Dendritic cell treated with granulocyte-macrophage colony-stimulating factor and Interleukin-4, amounts not matched to agents 40 ng/mL and 50 ng/mL, for 4 days (primary cell): ENCODE measurements at regions of chr19 and their contacts with region 1.

Region 1: DNA sequence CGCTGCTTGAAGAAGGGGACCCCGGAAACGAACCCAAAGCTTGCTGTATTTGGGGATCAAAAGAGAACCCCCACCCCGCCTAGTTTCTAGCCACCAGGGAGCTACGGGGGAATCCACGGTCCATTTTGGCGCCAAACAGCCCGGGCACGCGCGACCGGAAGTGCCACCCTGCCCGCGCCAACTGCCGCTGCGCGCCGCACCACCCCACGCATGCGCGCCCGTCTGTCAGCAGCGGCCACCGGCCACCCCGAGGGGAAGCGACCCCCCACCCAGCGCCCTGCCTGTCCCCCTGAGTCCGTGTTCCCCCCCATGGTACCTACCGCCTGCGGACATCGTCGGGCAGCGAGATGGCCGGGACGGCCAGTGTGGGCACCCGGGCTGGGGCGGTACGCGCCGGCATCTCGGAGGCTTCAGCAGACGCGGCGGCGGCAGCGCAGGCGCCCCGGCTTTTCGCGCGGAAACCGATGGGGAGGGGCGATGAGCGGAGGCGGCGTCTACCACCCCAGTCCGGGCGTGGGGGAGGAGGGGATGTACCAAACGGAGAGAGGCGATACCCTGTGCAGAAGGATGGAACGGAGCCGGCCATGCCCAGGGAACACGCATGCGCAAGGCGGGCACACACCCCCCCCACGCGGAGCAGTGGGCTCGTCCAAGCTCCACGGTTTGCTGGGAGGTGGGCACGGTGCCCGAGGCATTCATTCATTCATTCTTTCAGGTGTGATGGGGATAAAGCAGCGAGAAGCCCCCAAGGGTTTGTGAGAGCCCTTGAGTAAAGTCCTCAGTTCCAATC is at the start of gene DNMT1:
- H3K4me3 Mint-ChIP-seq: peak within 1 kb of the TSS; percentile 90
- H3K27ac Mint-ChIP-seq: peak within 1 kb of the TSS; percentile 85
- H3K4me1 Mint-ChIP-seq: peaks cover 71% of the 10 kb centered on the region
- H3K27me3 Mint-ChIP-seq: no peaks in the 10 kb centered on the region

Region 2: DNA sequence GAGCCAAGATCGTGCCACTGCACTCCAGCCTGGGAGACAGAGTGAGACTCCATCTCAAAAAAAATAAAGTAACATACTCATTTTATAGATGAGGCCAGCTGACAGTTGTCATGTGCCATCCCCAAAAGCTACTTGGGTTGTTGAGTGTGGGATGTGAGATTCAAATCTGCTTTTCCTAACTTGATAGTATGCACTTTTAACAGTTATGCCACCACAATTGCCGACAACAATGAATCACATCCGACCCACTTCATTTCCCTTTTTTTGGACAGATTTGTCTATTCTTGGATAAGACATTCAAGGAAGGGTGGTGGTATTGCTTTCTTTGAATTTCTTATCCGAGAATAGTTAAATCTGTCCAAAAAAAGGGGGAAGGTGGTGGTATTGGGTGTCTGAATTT is 16.4 kb after region 1 on chr19:
- intact Hi-C with region 1: loop called (anchors 2 kb)
- H3K4me3 Mint-ChIP-seq: peak overlapping the region; percentile 42
- H3K27ac Mint-ChIP-seq: peak overlapping the region; percentile 92
- H3K4me1 Mint-ChIP-seq: peaks cover 64% of the 10 kb centered on the region
- H3K27me3 Mint-ChIP-seq: no peaks in the 10 kb centered on the region

Region 3: GRCh38 chr19:10230861-10231611 is 36.3 kb after region 1 on chr19 and contains the start of gene S1PR2:
- intact Hi-C with region 1: loop called (anchors 5 kb)
- H3K4me3 Mint-ChIP-seq: peak within 1 kb of the TSS; percentile 92
- H3K27ac Mint-ChIP-seq: peak within 1 kb of the TSS; percentile 91
- H3K4me1 Mint-ChIP-seq: peaks cover 37% of the 10 kb centered on the region
- H3K27me3 Mint-ChIP-seq: peaks cover 6% of the 10 kb centered on the region